ENCODE measurements at regions of chr3 and their contacts with region 1.

Region 1: GRCh38 chr3:42652611-42653302 is 740 bp upstream of the ZBTB47 start:
- DNase-seq: no peak
- ATAC-seq: peak; percentile 68
- H3K4me3 ChIP-seq: peak overlapping the region; percentile 43 to 49; a peak in 3 of 4 replicates
- H3K27ac ChIP-seq: no peak overlapping the region
- H3K4me1 ChIP-seq: peaks cover 16% of the 10 kb centered on the region
- H3K27me3 ChIP-seq: no peaks in the 10 kb centered on the region
- CTCF ChIP-seq: no peak

Region 2: DNA sequence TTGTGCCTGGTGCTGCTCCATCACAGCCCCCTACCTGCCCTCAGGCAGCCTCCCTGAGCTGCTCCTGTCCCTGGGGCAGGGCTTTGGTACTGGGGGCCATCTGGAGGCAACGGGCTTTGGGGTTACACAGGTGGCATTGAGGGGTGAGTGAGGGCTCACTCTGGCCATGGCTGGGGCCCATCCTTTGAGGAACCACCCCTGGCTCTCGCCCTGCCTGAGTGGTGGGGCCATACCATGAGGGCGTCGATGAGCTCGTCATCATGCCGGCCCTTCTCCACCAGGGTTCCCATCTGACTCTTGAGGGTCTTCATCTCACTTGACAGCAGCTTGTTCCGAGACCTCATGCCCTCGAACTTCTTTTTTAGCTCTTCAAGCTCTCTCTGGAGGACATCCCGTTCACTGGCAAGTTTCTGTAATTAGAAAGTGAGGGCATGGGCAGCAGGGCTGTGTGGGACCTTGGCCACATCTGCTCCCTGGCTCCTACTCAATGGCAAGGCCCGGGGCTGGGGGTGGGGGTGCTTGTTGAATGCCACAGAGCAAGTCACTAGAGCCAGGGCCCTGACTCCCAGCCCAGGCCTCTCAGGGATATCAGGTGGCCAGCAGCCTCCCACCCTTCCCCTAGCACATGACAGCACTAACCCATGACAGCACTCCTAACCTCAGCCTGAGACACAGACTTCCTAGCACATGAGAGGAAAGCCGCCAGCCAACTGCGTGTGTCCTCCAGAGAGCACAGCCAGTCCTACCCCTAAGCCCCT is 86.8 kb after region 1 on chr3:
- CTCF ChIA-PET with region 1: no interaction called
- POLR2A ChIA-PET with region 1: no interaction called
- in situ Hi-C with region 1: no loop called
- intact Hi-C with region 1: loop called (anchors 5 kb)
- DNase-seq: no peak
- ATAC-seq: no peak
- H3K4me3 ChIP-seq: no peak overlapping the region
- H3K27ac ChIP-seq: no peak overlapping the region
- H3K4me1 ChIP-seq: no peaks in the 10 kb centered on the region
- H3K27me3 ChIP-seq: no peaks in the 10 kb centered on the region
- CTCF ChIP-seq: no peak

Region 3: DNA sequence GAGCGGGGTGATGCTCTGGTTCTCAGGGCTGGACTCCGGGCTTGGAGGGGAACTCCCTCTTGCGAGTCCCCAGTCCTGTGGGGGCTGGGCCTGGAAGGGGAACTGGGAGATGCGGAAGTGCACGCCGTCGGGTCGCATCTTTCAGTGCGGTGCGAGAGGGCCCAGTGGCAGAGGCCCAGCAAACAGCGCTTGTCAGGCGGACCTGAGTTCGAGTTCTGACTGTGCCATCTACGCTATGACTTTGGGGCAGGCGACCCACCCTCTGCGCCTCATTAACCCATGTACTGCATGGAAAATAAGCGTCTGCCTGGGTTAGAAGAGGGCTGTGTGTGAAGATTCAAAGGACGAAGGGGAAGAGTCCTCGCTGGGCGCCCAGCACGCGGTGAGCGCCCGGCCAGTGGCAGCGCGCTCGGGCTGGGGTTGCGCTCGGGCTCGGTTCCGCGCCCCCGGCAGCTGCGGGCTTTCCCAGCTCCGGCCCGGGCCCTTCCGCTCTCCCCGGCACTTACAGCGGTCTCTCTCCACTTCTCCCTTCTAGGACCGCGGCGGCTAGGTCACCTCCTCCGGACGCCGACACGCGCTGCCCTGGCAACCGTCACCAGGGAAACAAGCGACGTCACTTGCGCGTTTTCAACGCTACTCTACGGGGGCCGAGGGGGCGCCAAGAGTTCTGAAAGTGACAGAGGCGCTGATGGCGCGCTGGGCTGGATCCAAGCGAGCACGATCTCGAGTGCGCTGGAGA is 120.1 kb after region 1 on chr3 and contains the start of gene CCDC13:
- CTCF ChIA-PET with region 1: no interaction called
- POLR2A ChIA-PET with region 1: interaction called, 10 read pairs
- in situ Hi-C with region 1: no loop called
- intact Hi-C with region 1: no loop called
- DNase-seq: no peak
- ATAC-seq: peak; percentile 99
- H3K4me3 ChIP-seq: peak within 1 kb of the TSS; percentile 51 to 68
- H3K27ac ChIP-seq: peak within 1 kb of the TSS; percentile 77
- H3K4me1 ChIP-seq: no peaks in the 10 kb centered on the region
- H3K27me3 ChIP-seq: no peaks in the 10 kb centered on the region
- CTCF ChIP-seq: no peak
- total RNA-seq, gene CCDC13: 0.82 TPM